GM12878 (cell line): ENCODE measurements at regions of chr14 and their contacts with region 1.

Region 1: DNA sequence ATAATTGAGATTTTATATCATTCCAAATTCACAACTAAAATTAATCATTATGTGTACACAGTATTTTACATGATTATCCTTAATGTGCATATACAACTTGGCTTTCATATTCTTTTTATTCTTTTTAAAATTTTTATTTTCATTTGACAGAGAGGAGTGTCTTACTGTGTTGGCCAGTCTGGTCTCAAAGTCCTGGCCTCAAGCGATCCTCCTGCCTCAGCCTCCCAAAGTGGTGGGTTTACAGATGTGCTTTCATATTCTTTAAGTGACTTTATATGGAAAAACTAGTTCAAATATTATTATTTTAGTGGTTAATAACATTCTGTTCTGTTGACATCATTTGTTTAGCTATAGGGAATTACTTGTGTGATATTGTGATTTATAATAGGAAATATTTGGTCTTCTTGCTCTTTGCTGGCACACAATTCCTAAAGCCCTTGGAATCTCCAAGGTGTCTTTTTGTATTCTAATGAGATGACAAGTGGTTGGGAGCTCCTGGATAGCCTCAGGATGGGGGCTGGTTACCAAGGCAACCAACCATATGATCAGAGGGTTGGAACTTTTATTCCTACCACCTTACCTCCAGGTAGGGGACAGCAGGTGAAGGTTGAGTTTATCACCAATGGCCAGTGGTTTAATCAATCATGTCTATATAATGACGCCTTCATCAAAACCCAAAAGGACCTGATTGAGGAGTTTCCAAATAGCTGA is 16.0 kb upstream of the ZNF410 start:
- DNase-seq: no peak
- ATAC-seq: no peak
- H3K4me3 ChIP-seq: no peak overlapping the region
- H3K27ac ChIP-seq: no peak overlapping the region
- H3K4me1 ChIP-seq: no peaks in the 10 kb centered on the region
- H3K27me3 ChIP-seq: no peaks in the 10 kb centered on the region
- CTCF ChIP-seq: no peak
- EP300 ChIP-seq: no peak
- POLR2A ChIP-seq: no peak
- RAD21 ChIP-seq: no peak

Region 2: DNA sequence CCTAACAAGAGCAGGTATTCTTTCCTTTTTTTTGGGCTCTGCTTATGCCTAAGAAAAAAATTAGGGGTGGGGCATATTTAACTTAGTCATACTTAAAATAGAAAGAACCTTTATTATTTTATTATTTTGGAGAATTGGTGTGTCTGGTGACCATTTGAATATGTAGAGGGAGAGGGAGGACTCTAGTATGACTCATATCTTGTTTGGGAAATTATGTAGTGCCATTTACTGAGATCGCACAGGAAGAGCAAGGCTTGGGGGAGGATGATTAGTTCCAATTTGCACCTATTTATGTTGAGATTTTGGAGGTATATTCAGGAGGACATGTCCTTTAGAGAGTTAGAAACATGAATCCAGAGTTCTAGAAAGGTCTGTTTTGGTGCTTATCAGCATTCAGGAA is 25.8 kb after region 1 on chr14:
- CTCF ChIA-PET with region 1: interaction called, 4 read pairs
- POLR2A ChIA-PET with region 1: interaction called, 10 read pairs
- RAD21 ChIA-PET with region 1: no interaction called
- SMC1A ChIA-PET with region 1: no interaction called
- in situ Hi-C with region 1: no loop called
- intact Hi-C with region 1: no loop called
- DNase-seq: no peak
- ATAC-seq: no peak
- H3K4me3 ChIP-seq: no peak overlapping the region
- H3K27ac ChIP-seq: no peak overlapping the region
- H3K4me1 ChIP-seq: no peaks in the 10 kb centered on the region
- H3K27me3 ChIP-seq: no peaks in the 10 kb centered on the region
- CTCF ChIP-seq: no peak
- EP300 ChIP-seq: no peak
- POLR2A ChIP-seq: no peak
- RAD21 ChIP-seq: no peak